ENCODE measurements at regions of chr6 and their contacts with region 1.

Region 1: GRCh38 chr6:81067057-81067456 is 685.4 kb downstream of the TENT5A start:
- DNase-seq: no peak
- H3K4me3 ChIP-seq: no peak overlapping the region
- H3K27ac ChIP-seq: no peak overlapping the region
- H3K4me1 ChIP-seq: no peaks in the 10 kb centered on the region
- H3K27me3 ChIP-seq: no peaks in the 10 kb centered on the region
- CTCF ChIP-seq: no peak

Region 2: GRCh38 chr6:81023007-81023582 is 44.0 kb before region 1 on chr6:
- CTCF ChIA-PET with region 1: no interaction called
- dilution Hi-C with region 1: loop called (anchors 5 kb)
- in situ Hi-C with region 1: no loop called
- intact Hi-C with region 1: no loop called
- DNase-seq: no peak
- H3K4me3 ChIP-seq: no peak overlapping the region
- H3K27ac ChIP-seq: no peak overlapping the region
- H3K4me1 ChIP-seq: no peaks in the 10 kb centered on the region
- H3K27me3 ChIP-seq: no peaks in the 10 kb centered on the region
- CTCF ChIP-seq: no peak

Region 3: DNA sequence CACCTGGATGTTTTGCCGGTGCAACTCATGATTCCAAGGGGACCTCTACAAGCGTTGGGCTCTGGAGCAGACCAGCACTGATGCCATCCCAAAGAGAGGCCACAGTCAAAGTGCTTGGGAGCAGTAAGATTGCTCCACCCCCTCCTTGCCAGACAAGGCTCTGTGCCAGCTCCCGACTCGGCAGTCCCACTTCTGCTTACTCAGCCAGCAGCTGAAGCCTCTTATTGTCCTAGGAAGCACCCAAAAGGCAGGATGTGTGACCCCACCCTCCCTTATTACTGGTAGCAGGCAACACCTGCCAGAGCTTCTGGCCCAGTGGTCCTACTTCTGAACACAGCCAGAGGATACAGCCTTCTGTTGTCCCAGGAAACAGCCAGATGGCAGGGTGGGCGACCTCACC is 71.2 kb after region 1 on chr6:
- CTCF ChIA-PET with region 1: no interaction called
- dilution Hi-C with region 1: no loop called
- in situ Hi-C with region 1: no loop called
- intact Hi-C with region 1: no loop called
- DNase-seq: no peak
- H3K4me3 ChIP-seq: no peak overlapping the region
- H3K27ac ChIP-seq: no peak overlapping the region
- H3K4me1 ChIP-seq: no peaks in the 10 kb centered on the region
- H3K27me3 ChIP-seq: no peaks in the 10 kb centered on the region
- CTCF ChIP-seq: no peak